AG04450 (cell line): ENCODE measurements at regions of chr10 and their contacts with region 1.

Region 1: GRCh38 chr10:93968540-93968945 is 25.2 kb upstream of the PLCE1 start:
- DNase-seq: no peak
- H3K4me3 ChIP-seq: no peak overlapping the region
- H3K27ac ChIP-seq: no peak overlapping the region
- H3K27me3 ChIP-seq: no peaks in the 10 kb centered on the region
- CTCF ChIP-seq: no peak

Region 2: DNA sequence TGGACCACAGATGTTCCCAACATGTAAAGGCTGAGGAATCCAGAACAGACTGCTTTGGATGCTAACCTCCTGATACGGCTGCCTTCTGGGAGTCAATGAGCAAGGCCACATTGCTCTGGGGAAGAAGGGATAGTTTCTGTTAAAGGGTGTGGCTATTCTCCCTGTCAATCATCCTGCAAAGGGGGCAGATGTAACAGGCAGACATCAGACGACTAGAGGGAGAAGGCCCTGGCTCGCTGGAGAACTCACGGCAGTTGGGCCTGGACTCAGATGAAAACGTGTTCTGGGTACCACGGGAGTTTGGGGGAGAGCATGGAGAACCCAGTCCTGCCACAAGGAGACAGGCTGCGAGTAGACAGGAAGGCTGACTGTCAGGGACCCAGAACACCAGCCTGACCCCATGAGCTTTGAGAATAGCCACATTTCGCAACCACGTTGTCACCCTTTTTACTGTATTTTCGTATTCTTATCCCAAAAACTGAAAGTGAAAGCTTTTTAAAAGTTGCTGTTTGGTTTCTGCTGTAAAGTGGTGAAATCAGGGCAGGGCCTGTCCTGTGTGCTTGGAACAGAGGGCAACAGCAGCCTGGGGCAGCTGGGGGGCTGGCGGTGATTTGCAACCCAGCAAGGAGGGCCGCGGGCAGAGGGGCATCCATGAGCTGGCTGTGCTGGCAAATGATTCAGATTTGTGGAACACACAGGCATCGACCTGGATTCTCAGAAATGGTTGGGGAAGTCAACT is 581.7 kb before region 1 on chr10:
- CTCF ChIA-PET with region 1: no interaction called
- POLR2A ChIA-PET with region 1: no interaction called
- DNase-seq: no peak
- H3K4me3 ChIP-seq: no peak overlapping the region
- H3K27ac ChIP-seq: peak overlapping the region; percentile 47
- H3K27me3 ChIP-seq: no peaks in the 10 kb centered on the region
- CTCF ChIP-seq: no peak

Region 3: GRCh38 chr10:94315024-94315451 is 346.5 kb after region 1 on chr10:
- CTCF ChIA-PET with region 1: no interaction called
- POLR2A ChIA-PET with region 1: interaction called, 13 read pairs
- DNase-seq: no peak
- H3K4me3 ChIP-seq: no peak overlapping the region
- H3K27ac ChIP-seq: no peak overlapping the region
- H3K27me3 ChIP-seq: no peaks in the 10 kb centered on the region
- CTCF ChIP-seq: 0 out of 2 replicates have a peak, but pooled peaks have one; percentile 22